ENCODE measurements at regions of chr7 and their contacts with region 1.

Region 1: DNA sequence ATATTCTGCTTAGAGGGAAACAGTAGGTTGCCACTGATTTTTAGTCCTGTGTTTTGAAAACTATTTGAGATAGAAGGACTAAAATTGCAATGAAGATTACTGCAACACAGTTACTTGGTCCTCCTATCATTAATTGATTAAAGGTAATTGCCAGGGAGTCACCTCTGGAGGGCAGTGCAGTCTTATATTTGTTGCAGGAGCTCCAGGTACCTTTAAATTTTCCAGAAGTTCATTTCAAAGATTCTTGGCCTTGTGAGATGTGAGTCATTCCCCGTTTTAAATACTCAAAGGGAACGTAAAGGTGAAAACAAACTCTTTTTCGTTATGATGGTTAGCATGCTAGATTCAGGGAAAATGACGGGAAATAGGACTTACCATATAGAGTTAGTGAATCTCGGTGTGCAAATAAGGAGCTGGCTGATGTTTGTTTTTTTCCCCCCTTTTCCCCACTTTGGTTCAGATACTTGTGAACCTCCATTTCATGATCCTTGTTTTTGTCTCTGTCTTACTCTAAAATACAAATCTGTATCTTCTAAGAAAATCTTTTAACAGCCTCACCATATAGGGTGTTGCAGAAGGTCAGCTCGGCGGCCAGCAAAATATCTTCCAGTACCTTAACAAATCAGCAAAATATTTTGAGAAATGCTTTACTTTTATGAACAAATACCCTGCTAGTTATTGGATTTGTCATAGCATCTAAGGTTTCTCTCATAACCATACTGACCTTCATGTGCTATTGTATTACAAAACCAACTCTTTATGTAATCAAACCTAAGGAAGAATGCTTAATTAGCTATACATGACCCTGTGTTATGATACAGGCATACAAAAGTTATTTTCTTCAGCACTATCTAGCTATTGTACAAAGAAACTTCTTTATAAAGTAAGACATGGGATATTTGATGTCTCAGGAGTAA is 143.0 kb upstream of the HDAC9 start:
- DNase-seq: peak in 1 of 5 donors; percentile 20
- H3K4me3 ChIP-seq: no peak overlapping the region
- H3K27ac ChIP-seq: no peak overlapping the region
- H3K4me1 ChIP-seq: no peaks in the 10 kb centered on the region
- H3K27me3 ChIP-seq: no peaks in the 10 kb centered on the region
- CTCF ChIP-seq: peak in 1 of 3 donors; percentile 22
- EP300 ChIP-seq: no peak
- POLR2A ChIP-seq: no peak

Region 2: GRCh38 chr7:18393465-18394118 is 41.0 kb after region 1 on chr7:
- intact Hi-C with region 1: no loop called
- DNase-seq: no peak
- H3K4me3 ChIP-seq: no peak overlapping the region
- H3K27ac ChIP-seq: no peak overlapping the region
- H3K4me1 ChIP-seq: no peaks in the 10 kb centered on the region
- H3K27me3 ChIP-seq: no peaks in the 10 kb centered on the region
- CTCF ChIP-seq: no peak
- EP300 ChIP-seq: no peak
- POLR2A ChIP-seq: no peak

Region 3: DNA sequence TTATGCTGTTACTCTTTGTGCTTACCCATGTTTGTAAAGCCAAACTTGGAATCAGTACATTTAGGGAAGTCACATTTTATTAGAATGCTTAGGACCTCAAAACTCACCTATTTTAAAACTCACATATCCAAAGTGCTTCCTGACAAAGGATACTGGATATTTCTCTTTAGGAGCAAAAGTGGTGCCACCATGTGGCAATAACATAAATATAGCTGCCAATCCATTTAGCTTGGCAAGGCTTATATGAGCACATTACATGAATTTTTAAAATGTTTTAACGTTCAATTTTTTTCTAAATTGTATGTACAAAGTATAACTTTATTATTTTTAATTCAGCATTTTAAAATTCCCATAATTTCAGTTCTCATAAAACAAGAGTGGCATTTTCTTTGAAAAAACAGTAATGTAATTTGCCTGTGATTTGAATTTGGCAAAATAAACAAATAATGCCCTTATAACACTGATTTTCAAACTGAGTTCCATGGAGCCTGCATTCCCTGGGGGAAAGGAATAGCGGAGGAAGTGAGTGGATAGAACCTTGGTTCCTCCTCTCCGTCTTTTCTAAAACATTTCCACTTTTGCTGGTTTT is 218.4 kb after region 1 on chr7:
- intact Hi-C with region 1: loop called in 1 of 4 experiments (anchors 10 kb)
- DNase-seq: no peak
- H3K4me3 ChIP-seq: no peak overlapping the region
- H3K27ac ChIP-seq: no peak overlapping the region
- H3K4me1 ChIP-seq: no peaks in the 10 kb centered on the region
- H3K27me3 ChIP-seq: no peaks in the 10 kb centered on the region
- CTCF ChIP-seq: no peak
- EP300 ChIP-seq: no peak
- POLR2A ChIP-seq: no peak

Region 4: GRCh38 chr7:18666107-18666728 is 313.6 kb after region 1 on chr7:
- intact Hi-C with region 1: loop called in 1 of 4 experiments (anchors 10 kb)
- DNase-seq: peak; percentile 43 to 75 (median 54)
- H3K4me3 ChIP-seq: no peak overlapping the region
- H3K27ac ChIP-seq: no peak overlapping the region
- H3K4me1 ChIP-seq: no peaks in the 10 kb centered on the region
- H3K27me3 ChIP-seq: no peaks in the 10 kb centered on the region
- CTCF ChIP-seq: peak in 2 of 3 donors; percentile 31 to 32
- EP300 ChIP-seq: no peak
- POLR2A ChIP-seq: no peak

Measured in ovary (tissue), 10 donors.